ENCODE measurements at regions of chr14 and their contacts with region 1.

Region 1: GRCh38 chr14:90409209-90409730 is 12.4 kb downstream of the CALM1 start:
- DNase-seq: peak; percentile 38 to 61
- ATAC-seq: peak; percentile 32 to 62 (median 52)
- H3K4me3 ChIP-seq: no peak overlapping the region
- H3K27ac ChIP-seq: peak overlapping the region; percentile 92
- H3K4me1 ChIP-seq: peaks cover 31% of the 10 kb centered on the region
- H3K27me3 ChIP-seq: no peaks in the 10 kb centered on the region
- CTCF ChIP-seq: no peak

Region 2: DNA sequence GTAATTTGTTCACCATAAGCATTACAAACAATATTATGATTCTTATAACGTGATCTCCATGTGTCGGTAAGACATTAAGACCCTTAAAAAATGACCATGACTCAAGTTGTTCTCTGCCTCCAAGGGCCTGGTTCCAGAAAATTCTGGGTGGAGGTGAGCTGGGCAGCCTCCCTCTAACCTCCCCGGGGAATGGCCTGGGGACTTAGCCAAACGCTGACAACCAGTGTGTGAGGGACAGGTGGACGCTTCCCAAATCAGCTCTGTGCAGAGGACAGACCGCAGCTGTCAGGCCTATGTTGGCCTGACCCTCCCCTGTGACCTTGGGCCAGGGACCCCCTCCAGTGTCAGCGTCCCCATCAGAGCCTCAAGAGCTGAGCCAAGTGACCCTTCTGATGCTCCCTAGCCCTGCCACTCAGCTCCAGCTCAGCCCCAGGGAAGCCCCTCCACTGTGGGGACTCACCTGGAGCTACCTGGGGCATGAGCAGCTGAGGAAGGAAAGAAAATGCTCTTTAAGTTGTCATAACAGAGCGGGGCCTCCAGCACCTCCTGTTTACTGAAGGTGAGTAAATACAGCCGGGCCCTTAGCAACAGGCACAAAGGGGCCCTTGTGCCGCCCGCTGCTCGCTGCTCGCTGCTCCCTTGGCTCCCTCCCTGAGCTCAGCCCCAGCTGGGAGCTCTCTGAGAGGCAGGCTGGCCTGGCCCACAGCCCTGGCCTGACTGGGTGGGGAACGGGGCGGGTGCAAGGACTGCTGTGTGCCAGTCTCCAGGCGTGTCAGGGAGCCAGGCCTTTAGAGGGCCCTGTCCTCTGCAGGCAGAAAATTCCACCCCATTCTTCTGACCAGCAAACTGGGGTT is 104.1 kb after region 1 on chr14:
- intact Hi-C with region 1: loop called in 1 of 2 experiments (anchors 2 kb)
- DNase-seq: no peak
- ATAC-seq: peak; percentile 59 to 81 (median 77)
- H3K4me3 ChIP-seq: no peak overlapping the region
- H3K27ac ChIP-seq: peak overlapping the region; percentile 62
- H3K4me1 ChIP-seq: peaks cover 21% of the 10 kb centered on the region
- H3K27me3 ChIP-seq: no peaks in the 10 kb centered on the region
- CTCF ChIP-seq: no peak

Region 3: DNA sequence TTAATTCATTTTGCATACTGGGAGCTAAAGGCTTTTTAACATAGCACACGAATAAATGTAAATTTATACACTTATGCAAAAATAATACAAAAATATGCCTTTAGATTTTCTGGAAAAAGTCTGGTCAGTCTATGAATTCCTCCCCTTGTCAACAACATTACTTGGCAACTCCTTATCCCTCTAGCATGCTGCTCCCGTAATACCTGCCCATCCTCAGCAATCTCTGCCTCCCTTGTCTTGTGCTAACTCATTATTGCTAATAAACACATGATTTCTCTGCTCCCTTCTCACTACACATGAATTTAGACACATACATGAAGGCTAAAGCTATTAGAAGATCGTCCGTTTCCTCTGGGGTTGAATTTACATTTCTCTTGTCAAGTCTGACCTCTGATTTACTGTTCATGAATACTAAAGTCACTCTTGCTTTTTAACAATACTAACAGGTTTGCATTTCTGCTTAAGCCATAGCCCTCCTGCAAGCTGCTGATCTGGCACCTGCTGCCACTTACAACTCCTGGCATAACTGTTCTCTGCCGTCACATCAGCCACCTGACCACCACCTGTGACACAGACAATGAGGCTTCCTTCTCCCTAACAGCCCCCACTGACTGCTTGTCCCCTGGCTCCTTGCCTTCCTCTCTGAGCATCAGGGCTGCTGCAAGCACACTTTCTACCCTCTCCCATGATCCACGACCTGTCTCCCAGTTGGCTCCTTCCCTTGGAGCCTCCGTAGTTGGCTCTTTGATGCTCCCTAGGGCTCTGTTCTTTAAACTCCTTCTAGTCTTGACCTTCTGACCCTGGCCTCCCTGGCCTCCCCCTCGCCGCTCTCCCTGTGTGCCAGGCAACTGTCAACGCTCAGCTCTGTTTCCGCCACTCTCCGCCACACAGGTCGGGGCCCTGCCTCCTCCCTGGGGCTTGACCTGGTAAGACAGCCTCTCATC is 165.2 kb after region 1 on chr14:
- intact Hi-C with region 1: loop called in 1 of 2 experiments (anchors 5 kb)
- DNase-seq: peak; percentile 46 to 79
- ATAC-seq: peak; percentile 60 to 70 (median 68)
- H3K4me3 ChIP-seq: no peak overlapping the region
- H3K27ac ChIP-seq: peak overlapping the region; percentile 18
- H3K4me1 ChIP-seq: peaks cover 43% of the 10 kb centered on the region
- H3K27me3 ChIP-seq: no peaks in the 10 kb centered on the region
- CTCF ChIP-seq: no peak

Region 4: GRCh38 chr14:90608929-90609341 is 199.7 kb after region 1 on chr14:
- intact Hi-C with region 1: no loop called
- DNase-seq: no peak
- ATAC-seq: peak in 1 of 4 donors; percentile 5
- H3K4me3 ChIP-seq: no peak overlapping the region
- H3K27ac ChIP-seq: no peak overlapping the region
- H3K4me1 ChIP-seq: peaks cover 37% of the 10 kb centered on the region
- H3K27me3 ChIP-seq: no peaks in the 10 kb centered on the region
- CTCF ChIP-seq: no peak

Measured in psoas muscle (tissue), 8 donors.